Breast epithelium (tissue), 4 donors: ENCODE measurements at regions of chr18 and their contacts with region 1.

Region 1: DNA sequence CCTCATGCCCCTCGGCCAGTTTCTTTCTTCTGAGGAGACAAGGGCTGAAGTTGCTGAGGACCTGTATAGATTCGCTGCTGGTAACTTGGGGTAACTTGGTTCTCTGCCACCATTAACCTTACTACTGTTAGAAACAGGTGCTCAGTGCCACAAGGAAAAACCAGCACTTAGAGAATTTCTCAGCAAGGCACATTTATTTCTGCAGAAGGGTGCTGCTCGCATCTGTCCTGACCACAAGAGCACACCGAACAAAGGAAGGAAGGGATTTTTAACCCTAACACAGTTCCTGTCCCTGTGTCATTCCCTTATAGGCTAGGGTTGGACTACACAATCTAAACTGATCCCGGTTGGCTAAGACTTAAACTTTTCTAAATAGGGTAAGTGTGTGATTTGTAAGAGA is 154.1 kb downstream of the SOCS6 start:
- DNase-seq: no peak
- H3K4me3 ChIP-seq: no peak overlapping the region
- H3K27ac ChIP-seq: no peak overlapping the region
- H3K4me1 ChIP-seq: no peaks in the 10 kb centered on the region
- H3K27me3 ChIP-seq: no peaks in the 10 kb centered on the region
- CTCF ChIP-seq: no peak
- POLR2A ChIP-seq: no peak

Region 2: GRCh38 chr18:70205421-70206397 is 237.2 kb before region 1 on chr18 and contains the start of gene RTTN:
- intact Hi-C with region 1: loop called (anchors 10 kb)
- DNase-seq: peak; percentile 85 to 86
- H3K4me3 ChIP-seq: peak within 1 kb of the TSS; percentile 71 to 73 (median 72)
- H3K27ac ChIP-seq: peak within 1 kb of the TSS; percentile 95
- H3K4me1 ChIP-seq: no peaks in the 10 kb centered on the region
- H3K27me3 ChIP-seq: no peaks in the 10 kb centered on the region
- CTCF ChIP-seq: peak in 1 of 3 donors; percentile 21
- POLR2A ChIP-seq: no peak
- total RNA-seq, gene RTTN: 14.7 to 35.0 (median 29.8) TPM